Gastrocnemius medialis (tissue), 4 donors: ENCODE measurements at regions of chr19 and their contacts with region 1.

Region 1: GRCh38 chr19:47600246-47601179 is 8.4 kb upstream of the BICRA start:
- DNase-seq: peak; percentile 99 to 100
- ATAC-seq: peak; percentile 96 to 97
- H3K4me3 ChIP-seq: peak overlapping the region; percentile 62 to 68 (median 63)
- H3K27ac ChIP-seq: peak overlapping the region; percentile 89 to 94 (median 92)
- H3K4me1 ChIP-seq: peaks cover 22 to 24% of the 10 kb centered on the region in 2 donors
- H3K27me3 ChIP-seq: no peaks in the 10 kb centered on the region
- CTCF ChIP-seq: peak in 2 of 5 experiments; percentile 10 to 34
- POLR2A ChIP-seq: peak; percentile 90 to 97

Region 2: DNA sequence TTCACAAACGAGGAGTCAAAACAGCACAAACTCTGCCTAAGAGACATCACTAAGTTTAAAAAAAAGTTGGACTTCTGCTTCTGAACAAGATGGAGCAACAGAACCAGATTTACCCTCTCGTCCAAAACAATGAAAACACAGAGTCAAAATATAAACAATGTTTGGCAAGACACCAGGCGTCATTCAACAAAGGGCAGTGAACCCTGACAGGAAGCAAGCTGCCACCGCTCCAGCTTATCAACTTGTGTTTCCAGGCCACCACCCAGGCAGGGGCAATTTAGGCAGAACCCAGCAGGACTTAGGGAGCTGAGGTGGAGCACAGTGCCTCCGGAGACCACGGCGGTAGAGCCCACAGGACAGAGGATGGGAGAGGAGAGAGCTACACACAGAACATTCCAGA is 77.0 kb before region 1 on chr19:
- in situ Hi-C with region 1: loop called in 1 of 4 experiments (anchors 10 kb)
- intact Hi-C with region 1: no loop called
- DNase-seq: no peak
- ATAC-seq: no peak
- H3K4me3 ChIP-seq: no peak overlapping the region
- H3K27ac ChIP-seq: no peak overlapping the region
- H3K4me1 ChIP-seq: peaks cover 6 to 9% of the 10 kb centered on the region in 2 donors
- H3K27me3 ChIP-seq: no peaks in the 10 kb centered on the region
- CTCF ChIP-seq: no peak
- POLR2A ChIP-seq: no peak

Region 3: GRCh38 chr19:47573071-47574026 is 27.2 kb before region 1 on chr19 and contains the start of gene ZNF541:
- in situ Hi-C with region 1: no loop called
- intact Hi-C with region 1: no loop called
- DNase-seq: peak; percentile 2 to 15
- ATAC-seq: no peak
- H3K4me3 ChIP-seq: peak within 1 kb of the TSS; percentile 36 to 48 (median 45)
- H3K27ac ChIP-seq: no peak within 1 kb of the TSS
- H3K4me1 ChIP-seq: no peaks in the 10 kb centered on the region
- H3K27me3 ChIP-seq: peaks cover 17 to 25% (median 22%) of the 10 kb centered on the region in 3 donors
- CTCF ChIP-seq: no peak
- POLR2A ChIP-seq: no peak
- total RNA-seq, gene ZNF541: not detected

Region 4: GRCh38 chr19:47663841-47664771 is 63.6 kb after region 1 on chr19:
- in situ Hi-C with region 1: no loop called
- intact Hi-C with region 1: loop called (anchors 2 kb)
- DNase-seq: peak; percentile 92 to 93
- ATAC-seq: peak; percentile 73 to 78
- H3K4me3 ChIP-seq: peak overlapping the region; percentile 9 to 39 (median 26)
- H3K27ac ChIP-seq: peak overlapping the region; percentile 88 to 99 (median 93)
- H3K4me1 ChIP-seq: peaks cover 73 to 89% of the 10 kb centered on the region in 2 donors
- H3K27me3 ChIP-seq: no peaks in the 10 kb centered on the region
- CTCF ChIP-seq: no peak
- POLR2A ChIP-seq: peak; percentile 50 to 54

Region 5: GRCh38 chr19:47707135-47707925 is 106.8 kb after region 1 on chr19:
- in situ Hi-C with region 1: loop called in 1 of 4 experiments (anchors 10 kb)
- intact Hi-C with region 1: no loop called
- DNase-seq: peak; percentile 36 to 71
- ATAC-seq: peak; percentile 81 to 89
- H3K4me3 ChIP-seq: no peak overlapping the region
- H3K27ac ChIP-seq: no peak overlapping the region
- H3K4me1 ChIP-seq: no peaks in the 10 kb centered on the region
- H3K27me3 ChIP-seq: no peaks in the 10 kb centered on the region
- CTCF ChIP-seq: peak; percentile 77 to 89 (median 87)
- POLR2A ChIP-seq: no peak

Region 6: GRCh38 chr19:47863514-47863936 is 263.0 kb after region 1 on chr19:
- in situ Hi-C with region 1: no loop called
- intact Hi-C with region 1: no loop called
- DNase-seq: peak; percentile 17 to 32
- ATAC-seq: no peak
- H3K4me3 ChIP-seq: no peak overlapping the region
- H3K27ac ChIP-seq: no peak overlapping the region
- H3K4me1 ChIP-seq: no peaks in the 10 kb centered on the region
- H3K27me3 ChIP-seq: no peaks in the 10 kb centered on the region
- CTCF ChIP-seq: peak; percentile 23 to 83 (median 60)
- POLR2A ChIP-seq: no peak